Transverse colon (tissue), 4 donors: ENCODE measurements at regions of chr6 and their contacts with region 1.

Region 1: DNA sequence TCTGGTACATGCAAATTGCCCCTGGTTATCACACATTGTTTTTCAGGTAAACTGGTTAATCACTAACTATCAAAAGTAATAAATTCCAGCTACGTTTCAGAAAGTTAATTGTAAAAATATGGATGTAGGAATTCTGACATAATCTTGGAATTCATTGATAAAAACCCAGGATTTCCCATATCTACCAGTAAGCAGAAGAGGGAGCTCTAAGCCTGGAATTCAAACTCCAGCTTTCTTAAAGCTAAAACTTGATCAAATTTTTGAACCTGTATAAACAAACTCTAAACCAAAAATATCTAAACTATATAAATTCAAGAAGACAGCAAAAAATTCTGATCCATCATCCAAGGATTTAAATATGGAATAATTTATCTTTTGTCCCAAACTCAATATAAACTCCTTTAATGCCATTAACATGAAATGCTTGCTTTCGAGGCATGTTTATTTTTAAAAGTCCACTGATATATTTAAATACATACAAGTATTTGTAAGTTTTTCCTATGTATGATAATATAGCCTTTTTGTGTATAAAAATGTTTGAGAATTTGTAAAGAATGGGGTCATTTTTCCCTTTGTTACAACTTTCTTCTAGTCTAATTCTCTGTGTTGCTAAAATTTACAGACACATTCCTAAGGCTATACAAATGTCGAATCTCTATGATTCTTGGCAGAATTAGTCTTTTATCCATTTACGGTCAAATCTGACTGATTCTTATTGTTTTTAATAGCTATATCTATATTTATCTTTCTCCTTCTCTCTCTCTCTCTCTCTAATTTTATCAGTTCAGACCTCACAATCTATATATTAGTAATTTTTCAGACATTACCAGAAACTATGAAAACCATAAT is 91.4 kb upstream of the RNF217 start:
- DNase-seq: no peak
- H3K4me3 ChIP-seq: no peak overlapping the region
- H3K27ac ChIP-seq: no peak overlapping the region
- H3K4me1 ChIP-seq: no peaks in the 10 kb centered on the region
- H3K27me3 ChIP-seq: no peaks in the 10 kb centered on the region
- CTCF ChIP-seq: peak; percentile 56 to 71 (median 65)
- EP300 ChIP-seq: no peak
- POLR2A ChIP-seq: no peak

Region 2: GRCh38 chr6:124792386-124792785 is 78.4 kb before region 1 on chr6:
- in situ Hi-C with region 1: no loop called
- intact Hi-C with region 1: no loop called
- DNase-seq: no peak
- H3K4me3 ChIP-seq: no peak overlapping the region
- H3K27ac ChIP-seq: no peak overlapping the region
- H3K4me1 ChIP-seq: no peaks in the 10 kb centered on the region
- H3K27me3 ChIP-seq: no peaks in the 10 kb centered on the region
- CTCF ChIP-seq: no peak
- EP300 ChIP-seq: no peak
- POLR2A ChIP-seq: no peak

Region 3: DNA sequence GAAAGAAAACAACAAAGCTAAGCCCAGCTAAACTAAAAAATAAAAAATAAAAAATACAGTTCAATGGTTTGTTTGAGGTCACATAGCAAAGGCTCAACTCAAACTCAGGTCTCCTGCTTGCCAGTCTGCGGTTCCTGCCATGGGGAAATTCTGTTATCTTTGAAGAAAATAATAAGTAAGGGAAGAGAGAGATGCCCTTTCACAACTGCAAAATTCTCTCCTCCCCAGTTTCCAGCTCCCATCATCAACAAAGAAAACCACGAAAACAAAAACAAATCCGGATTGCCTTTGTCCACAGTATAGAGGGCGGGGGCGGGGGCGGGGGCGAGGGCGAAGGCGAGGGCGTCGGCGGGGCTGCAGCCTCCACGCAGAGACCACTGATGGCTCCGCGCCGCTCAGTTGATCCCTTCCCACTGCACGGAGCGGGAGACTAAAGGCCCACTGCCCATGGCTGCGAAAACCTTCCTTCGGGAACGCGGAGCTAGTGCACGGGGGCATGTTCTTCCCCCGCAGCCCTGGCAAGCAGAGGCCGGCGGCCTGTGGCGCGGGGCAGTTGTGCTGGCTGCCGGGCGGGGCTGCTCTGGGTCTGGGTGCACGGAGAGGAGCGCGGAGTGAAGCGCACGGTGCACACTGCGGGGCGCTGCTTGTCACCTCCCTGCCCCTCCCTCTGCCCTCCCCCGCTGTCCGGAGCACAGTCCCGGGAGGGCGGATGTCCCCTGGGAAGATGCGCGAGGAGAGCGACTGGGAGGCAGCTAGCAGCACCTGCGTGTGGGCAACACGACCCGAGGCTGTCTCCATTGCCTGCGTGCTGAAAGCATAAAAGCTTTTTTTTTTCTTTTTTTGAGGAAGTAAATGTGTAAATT is 228.6 kb after region 1 on chr6:
- in situ Hi-C with region 1: no loop called
- intact Hi-C with region 1: no loop called
- DNase-seq: peak; percentile 61
- H3K4me3 ChIP-seq: peak overlapping the region; percentile 31 to 50 (median 40)
- H3K27ac ChIP-seq: peak overlapping the region; percentile 11 to 58 (median 39)
- H3K4me1 ChIP-seq: peaks cover 0 to 16% (median 13%) of the 10 kb centered on the region in 4 donors
- H3K27me3 ChIP-seq: no peaks in the 10 kb centered on the region
- CTCF ChIP-seq: no peak
- EP300 ChIP-seq: no peak
- POLR2A ChIP-seq: no peak

Region 4: DNA sequence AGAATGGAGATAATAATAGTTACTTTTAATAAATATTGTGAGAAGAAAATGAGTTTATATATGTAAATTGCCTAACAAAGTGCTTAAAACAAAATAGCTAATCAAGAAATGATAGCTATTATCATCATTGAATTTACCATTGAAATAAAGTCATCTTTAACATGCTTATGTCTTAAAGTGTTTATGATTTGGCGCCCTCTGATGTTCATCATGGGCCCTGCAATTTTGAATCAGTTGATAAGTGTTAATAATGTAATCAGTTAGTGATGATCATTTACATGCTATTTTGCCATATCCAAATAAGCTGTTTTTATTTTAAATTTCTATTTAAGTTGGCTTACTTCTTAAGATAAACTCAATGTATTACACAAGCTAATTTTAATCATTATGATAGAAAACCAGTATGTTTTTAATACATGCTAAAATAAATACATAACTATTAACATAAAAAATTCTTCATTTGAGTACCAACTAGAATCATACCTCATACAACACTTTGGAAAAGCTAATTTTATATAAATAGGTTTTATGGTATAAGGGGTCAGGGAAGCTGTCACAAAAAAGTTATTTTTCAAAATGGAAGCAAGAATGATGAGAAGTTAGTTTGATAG is 243.5 kb after region 1 on chr6:
- in situ Hi-C with region 1: loop called (anchors 5 to 10 kb)
- intact Hi-C with region 1: no loop called
- DNase-seq: peak; percentile 59
- H3K4me3 ChIP-seq: no peak overlapping the region
- H3K27ac ChIP-seq: no peak overlapping the region
- H3K4me1 ChIP-seq: no peaks in the 10 kb centered on the region
- H3K27me3 ChIP-seq: no peaks in the 10 kb centered on the region
- CTCF ChIP-seq: peak; percentile 66 to 85 (median 82)
- EP300 ChIP-seq: no peak
- POLR2A ChIP-seq: no peak

Region 5: DNA sequence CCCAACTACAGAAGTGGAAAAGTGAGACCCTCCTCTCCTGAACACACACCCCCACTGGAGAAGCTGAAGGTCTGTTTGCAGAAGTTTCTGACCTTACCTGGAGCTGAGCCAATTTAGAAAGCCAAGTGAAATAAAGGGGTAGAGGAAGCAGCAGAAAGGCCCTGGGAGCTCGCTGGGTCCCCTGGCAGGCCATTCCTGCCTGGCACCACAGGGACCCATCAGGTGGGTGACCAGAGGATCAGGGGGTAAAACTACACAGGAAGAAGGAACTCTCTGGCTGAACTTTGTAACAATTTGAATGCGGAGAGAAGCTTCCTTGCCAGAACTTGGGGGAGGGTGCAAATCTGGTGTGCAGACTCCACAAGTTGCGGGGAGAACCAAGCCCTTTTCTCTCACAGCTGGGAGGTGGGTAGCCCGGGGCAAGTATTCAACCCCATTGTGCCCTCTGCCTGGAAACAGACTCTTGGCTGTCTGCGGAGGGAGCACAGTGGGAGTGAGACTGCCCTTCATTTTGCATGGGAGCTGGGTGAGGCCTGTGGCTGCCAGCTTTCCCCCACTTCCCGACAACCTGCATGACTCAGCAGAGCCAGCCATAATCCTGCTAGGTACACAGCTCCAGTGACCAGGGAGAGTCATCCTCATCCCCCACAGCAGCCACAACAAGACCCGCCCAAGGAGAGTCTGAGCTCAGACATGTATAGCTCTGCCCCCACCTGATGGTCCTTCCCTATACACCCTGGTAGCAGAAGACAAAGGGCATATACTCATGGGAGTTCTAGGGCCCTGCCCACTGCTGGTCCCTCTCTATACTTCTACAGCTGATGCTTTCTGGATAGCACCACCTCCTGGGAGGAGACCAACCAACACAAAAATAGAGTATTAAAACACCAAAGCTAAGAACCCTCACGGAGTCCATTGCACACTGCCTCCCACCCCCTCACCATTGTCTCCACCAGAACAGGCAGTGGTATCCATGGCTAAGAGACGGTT is 253.2 kb after region 1 on chr6:
- in situ Hi-C with region 1: loop called in 2 of 4 experiments (anchors 10 kb)
- intact Hi-C with region 1: loop called (anchors 5 kb)
- DNase-seq: no peak
- H3K4me3 ChIP-seq: no peak overlapping the region
- H3K27ac ChIP-seq: no peak overlapping the region
- H3K4me1 ChIP-seq: no peaks in the 10 kb centered on the region
- H3K27me3 ChIP-seq: no peaks in the 10 kb centered on the region
- CTCF ChIP-seq: no peak
- EP300 ChIP-seq: no peak
- POLR2A ChIP-seq: no peak

Region 6: DNA sequence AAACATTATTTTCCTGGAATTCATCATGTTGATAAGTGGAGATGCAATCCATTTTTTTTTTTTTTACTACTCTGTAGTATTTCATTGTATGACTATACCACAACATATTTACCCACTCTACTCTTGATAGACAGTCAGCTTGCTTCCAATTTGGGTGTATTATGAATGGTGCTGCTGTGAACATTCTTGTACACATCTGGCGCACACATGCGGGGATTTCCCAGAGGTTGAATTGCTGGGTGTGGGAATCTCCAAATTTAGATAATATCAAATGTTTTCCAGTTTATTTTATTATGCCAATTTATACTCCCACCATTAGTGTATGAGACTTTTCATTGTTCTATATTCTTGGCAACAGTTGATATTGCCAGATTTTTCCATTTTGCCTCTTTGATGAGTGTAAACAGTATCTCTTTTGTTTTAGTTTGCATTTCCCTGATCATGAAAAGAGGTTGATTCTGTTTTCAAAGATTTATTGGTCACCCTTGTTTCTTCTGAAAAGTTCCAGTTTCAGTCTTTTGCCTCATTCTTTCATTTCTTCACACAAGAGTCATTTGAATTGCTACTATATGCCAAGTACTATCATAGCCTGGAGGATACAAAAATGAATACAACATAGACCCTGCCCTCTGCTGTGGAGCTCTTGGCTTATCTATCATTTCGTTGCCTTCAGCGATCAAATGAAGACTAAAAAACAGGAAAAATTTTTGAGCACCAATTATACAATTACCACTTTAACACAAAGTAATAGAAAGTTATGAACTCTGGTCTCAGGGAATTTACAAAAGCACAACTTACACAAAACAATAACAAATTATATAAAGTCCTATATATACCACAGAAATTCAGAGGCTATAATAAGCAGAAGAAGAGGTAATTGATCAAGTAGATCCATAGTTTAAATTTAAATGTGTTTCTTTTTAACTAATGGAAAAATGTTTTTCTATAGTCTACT is 902.8 kb after region 1 on chr6:
- in situ Hi-C with region 1: no loop called
- intact Hi-C with region 1: loop called (anchors 5 kb)
- DNase-seq: no peak
- H3K4me3 ChIP-seq: no peak overlapping the region
- H3K27ac ChIP-seq: no peak overlapping the region
- H3K4me1 ChIP-seq: no peaks in the 10 kb centered on the region
- H3K27me3 ChIP-seq: peaks cover 15% of the 10 kb centered on the region
- CTCF ChIP-seq: no peak
- EP300 ChIP-seq: no peak
- POLR2A ChIP-seq: no peak